H1 (cell line): ENCODE measurements at regions of chr16 and their contacts with region 1.

Region 1: GRCh38 chr16:50509521-50510341 is 38.5 kb upstream of the NKD1 start:
- DNase-seq: peak; percentile 65 to 95
- H3K4me3 ChIP-seq: no peak overlapping the region
- H3K27ac ChIP-seq: no peak overlapping the region
- H3K4me1 ChIP-seq: peaks cover 0 to 6% (median 1%) of the 10 kb centered on the region in 4 experiments; a peak in 5 of 7 replicates
- H3K27me3 ChIP-seq: no peaks in the 10 kb centered on the region
- CTCF ChIP-seq: peak; percentile 58 to 93 (median 83)
- EP300 ChIP-seq: 0 out of 3 replicates have a peak, but pooled peaks of 1 of the 2 experiments have one; percentile 10
- POLR2A ChIP-seq: no peak
- RAD21 ChIP-seq: peak; percentile 78 to 86

Region 2: DNA sequence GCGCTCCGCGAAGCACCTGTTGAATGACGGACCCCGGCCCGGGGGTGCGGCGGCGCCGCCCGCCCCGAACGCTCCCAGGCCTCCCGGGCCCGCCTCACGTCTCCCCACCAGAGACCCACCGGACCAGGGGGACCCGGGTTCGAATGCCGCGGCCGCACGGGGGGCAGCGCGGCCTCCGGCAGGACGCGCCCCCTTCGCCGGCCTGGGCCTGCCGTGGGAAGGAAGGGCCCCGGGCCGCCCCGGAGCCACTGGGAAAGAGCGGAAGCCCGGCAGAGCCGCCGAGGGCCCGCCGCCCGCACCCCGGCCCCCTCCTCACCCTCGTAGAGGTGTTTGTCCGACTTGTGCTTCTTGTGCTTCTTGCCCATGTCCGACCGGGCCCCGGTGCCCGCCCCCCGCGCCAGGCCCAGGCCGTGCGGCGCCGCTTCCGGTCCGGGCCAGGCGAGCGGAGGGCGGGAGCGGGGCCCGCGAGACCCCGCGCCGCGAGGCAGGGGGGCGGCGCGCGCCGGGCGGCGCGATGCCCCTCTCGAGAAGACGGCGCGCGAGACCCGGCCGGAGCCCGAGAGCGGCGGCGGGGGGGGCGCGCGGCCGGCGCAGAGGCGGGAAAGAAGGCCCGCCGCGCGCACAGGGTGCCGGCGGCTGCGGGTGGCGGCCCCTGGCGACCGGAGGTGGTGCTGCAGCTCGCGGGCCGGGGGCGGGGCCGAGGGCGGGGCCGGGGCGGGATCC is 141.2 kb before region 1 on chr16 and contains the start of gene BRD7:
- CTCF ChIA-PET with region 1: interaction called, 16 read pairs
- POLR2A ChIA-PET with region 1: no interaction called
- DNase-seq: peak in 1 of 2 experiments; percentile 71
- H3K4me3 ChIP-seq: peak within 1 kb of the TSS; percentile 69 to 98 (median 80)
- H3K27ac ChIP-seq: peak within 1 kb of the TSS; percentile 55; the same call in 1 of the 2 replicates
- H3K4me1 ChIP-seq: peaks cover 0 to 6% (median 3%) of the 10 kb centered on the region in 4 experiments; a peak in 4 of 7 replicates
- H3K27me3 ChIP-seq: no peaks in the 10 kb centered on the region
- CTCF ChIP-seq: peak; percentile 38 to 62 (median 59)
- EP300 ChIP-seq: no peak
- POLR2A ChIP-seq: peak in 1 of 2 experiments; percentile 30; a peak in 1 of 3 replicates
- RAD21 ChIP-seq: 0 out of 4 replicates have a peak, but pooled peaks of 1 of the 2 experiments have one; percentile 15
- total RNA-seq, gene BRD7: 119 and 120 TPM in 2 replicates

Region 3: GRCh38 chr16:50448501-50448900 is 61.2 kb before region 1 on chr16:
- CTCF ChIA-PET with region 1: interaction called, 13 read pairs
- POLR2A ChIA-PET with region 1: no interaction called
- DNase-seq: peak in 1 of 2 experiments; percentile 63
- H3K4me3 ChIP-seq: no peak overlapping the region; a peak in 1 of 8 replicates
- H3K27ac ChIP-seq: no peak overlapping the region
- H3K4me1 ChIP-seq: peaks cover 9 to 30% (median 17%) of the 10 kb centered on the region in 4 experiments; a peak in 6 of 7 replicates
- H3K27me3 ChIP-seq: no peaks in the 10 kb centered on the region; a peak in 1 of 7 replicates
- CTCF ChIP-seq: peak; percentile 62 to 76 (median 67)
- EP300 ChIP-seq: no peak
- POLR2A ChIP-seq: no peak
- RAD21 ChIP-seq: peak; percentile 65 to 75

Region 4: DNA sequence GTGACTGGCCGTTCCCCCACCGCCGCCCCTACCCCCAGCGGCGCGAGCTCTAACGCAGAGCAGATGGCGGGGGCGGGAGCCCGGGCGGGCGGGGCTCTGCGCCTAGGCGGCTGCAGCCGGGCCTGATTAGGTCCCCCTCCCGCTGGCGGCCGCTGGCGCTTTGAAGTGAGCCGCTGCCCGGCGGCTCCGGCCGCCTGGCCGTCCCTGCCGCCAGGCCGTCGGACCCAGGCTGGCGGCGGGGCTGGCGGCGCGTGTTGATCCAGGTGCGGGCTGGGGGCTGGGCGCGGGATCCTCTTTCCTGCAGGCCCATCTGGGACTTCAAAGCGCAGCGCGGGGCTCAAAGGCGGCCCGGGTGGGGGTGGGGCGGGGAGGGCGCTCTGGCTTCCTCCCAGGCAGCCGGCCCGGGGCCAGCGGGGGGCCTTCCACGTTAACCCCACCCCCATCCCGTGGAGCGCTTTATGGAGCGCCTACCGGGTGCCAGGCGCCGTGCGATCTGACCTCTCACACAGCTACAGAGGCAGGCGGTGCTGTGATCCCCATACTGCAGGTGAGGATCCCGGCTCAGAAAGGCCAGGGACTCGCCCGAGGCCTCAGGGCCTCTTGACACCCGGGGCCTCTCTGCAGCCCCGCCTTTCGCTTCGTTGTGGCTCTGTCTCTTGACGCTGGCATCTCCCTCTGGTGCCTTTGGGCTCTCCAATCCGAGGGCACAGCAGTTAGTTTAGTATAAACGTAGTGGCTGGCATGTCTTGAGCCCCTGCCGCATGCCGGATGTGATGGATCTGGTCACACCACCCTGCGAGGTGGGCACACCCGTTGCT is 41.6 kb before region 1 on chr16:
- CTCF ChIA-PET with region 1: interaction called, 23 read pairs
- POLR2A ChIA-PET with region 1: no interaction called
- DNase-seq: peak in 1 of 2 experiments; percentile 74
- H3K4me3 ChIP-seq: peak overlapping the region; percentile 27 to 53 (median 36)
- H3K27ac ChIP-seq: no peak overlapping the region
- H3K4me1 ChIP-seq: peaks cover 4 to 25% (median 15%) of the 10 kb centered on the region in 4 experiments
- H3K27me3 ChIP-seq: peaks cover 3 to 29% (median 26%) of the 10 kb centered on the region in 4 experiments
- CTCF ChIP-seq: 0 out of 4 replicates have a peak, but pooled peaks of 1 of the 3 experiments have one; percentile 7
- EP300 ChIP-seq: 0 out of 3 replicates have a peak, but pooled peaks of 1 of the 2 experiments have one; percentile 61
- POLR2A ChIP-seq: no peak
- RAD21 ChIP-seq: peak in 1 of 2 experiments; percentile 6; a peak in 1 of 4 replicates

Region 5: GRCh38 chr16:50520451-50521245 is 10.9 kb after region 1 on chr16:
- CTCF ChIA-PET with region 1: interaction called, 16 read pairs
- POLR2A ChIA-PET with region 1: no interaction called
- DNase-seq: no peak
- H3K4me3 ChIP-seq: no peak overlapping the region
- H3K27ac ChIP-seq: no peak overlapping the region
- H3K4me1 ChIP-seq: peaks cover 0 to 2% (median 0%) of the 10 kb centered on the region in 4 experiments; a peak in 1 of 7 replicates
- H3K27me3 ChIP-seq: no peaks in the 10 kb centered on the region
- CTCF ChIP-seq: no peak
- EP300 ChIP-seq: no peak
- POLR2A ChIP-seq: no peak
- RAD21 ChIP-seq: no peak

Region 6: DNA sequence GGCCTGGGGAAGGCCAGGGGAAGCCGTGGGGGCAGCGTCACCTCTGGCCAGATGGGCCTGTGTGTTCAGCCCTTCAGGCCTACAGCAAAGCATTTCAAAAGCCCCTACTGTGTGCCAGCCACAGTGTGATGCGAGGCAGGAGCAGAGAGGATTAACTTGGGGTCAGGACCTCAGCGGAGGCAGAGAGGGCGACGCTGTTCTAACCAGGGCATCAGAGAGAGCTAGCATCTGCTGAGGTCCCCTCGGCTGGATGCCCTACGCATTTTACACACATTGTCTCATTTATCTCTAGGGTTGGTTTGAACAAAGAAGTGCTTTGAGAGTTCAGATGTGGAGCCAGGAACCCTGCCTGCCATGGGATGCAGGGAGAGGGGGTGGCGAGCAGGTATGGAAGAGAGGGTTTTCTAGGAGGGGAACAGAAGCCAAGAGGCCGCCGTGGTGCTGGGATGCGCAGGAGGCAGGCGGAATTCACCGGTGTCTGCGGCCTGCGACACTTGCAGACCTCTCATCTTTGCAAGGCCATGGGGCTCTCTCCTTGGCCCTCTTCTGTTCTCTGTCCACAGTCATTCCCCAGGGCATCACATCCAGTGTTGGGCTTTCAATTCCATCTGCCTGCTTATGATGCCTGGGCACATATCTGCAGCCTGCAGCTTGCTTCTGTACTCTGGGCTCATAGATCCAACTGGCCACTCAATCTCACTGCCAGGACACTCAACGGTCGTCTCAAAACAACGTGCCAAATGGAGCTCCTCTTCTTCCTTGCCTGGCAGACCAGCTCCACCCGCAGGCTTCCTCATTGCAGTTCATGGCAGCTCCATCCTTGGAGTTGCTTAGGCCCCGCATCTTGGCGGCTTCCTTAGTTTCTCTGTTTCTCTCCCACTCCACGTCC is 30.3 kb after region 1 on chr16:
- CTCF ChIA-PET with region 1: interaction called, 10 read pairs
- POLR2A ChIA-PET with region 1: no interaction called
- DNase-seq: no peak
- H3K4me3 ChIP-seq: no peak overlapping the region
- H3K27ac ChIP-seq: no peak overlapping the region
- H3K4me1 ChIP-seq: peaks cover 0 to 7% (median 3%) of the 10 kb centered on the region in 4 experiments; a peak in 4 of 7 replicates
- H3K27me3 ChIP-seq: peaks cover 0 to 3% (median 1%) of the 10 kb centered on the region in 4 experiments; a peak in 1 of 7 replicates
- CTCF ChIP-seq: peak; percentile 48 to 57 (median 56); a peak in 3 of 4 replicates
- EP300 ChIP-seq: no peak
- POLR2A ChIP-seq: no peak
- RAD21 ChIP-seq: peak; percentile 69 to 71

Region 7: DNA sequence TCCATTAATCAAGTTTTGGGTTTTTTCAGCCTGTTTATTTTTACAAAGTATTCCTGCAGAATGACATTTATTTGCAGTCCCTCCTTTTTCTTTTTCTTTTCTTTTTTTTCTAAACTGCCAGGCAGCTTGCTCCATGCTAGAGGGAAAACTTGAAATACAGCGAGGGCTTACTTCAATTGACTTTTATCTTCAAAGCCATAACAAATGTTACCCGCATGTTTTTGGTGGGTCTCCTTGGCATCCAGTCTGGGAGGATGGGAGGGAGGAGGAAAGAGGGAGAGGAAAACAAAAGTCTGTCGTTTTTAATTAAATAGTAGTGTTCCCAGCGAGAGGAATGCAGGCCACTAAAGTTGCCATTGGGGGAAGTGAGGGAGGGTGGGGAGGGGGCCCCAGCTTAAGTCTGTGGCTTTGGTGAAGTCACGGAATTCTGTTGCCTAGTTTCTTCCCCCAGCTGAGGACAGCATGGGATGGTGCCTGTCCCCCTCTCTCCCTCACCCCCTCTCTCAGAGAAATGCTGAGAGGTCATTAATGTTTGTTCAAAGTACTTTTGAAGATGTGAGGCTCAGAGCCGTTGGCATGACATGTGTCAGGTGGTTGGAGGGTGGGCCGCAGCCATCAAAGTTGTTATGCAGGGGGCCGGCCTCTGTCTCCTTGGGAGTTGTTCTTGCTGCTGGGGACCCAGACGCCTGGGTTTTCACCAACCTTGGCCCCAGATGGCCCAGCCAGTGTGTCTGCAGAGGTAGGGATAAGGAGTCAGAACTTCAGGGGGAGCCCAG is 41.3 kb after region 1 on chr16:
- CTCF ChIA-PET with region 1: no interaction called
- POLR2A ChIA-PET with region 1: no interaction called
- DNase-seq: no peak
- H3K4me3 ChIP-seq: no peak overlapping the region
- H3K27ac ChIP-seq: no peak overlapping the region
- H3K4me1 ChIP-seq: peaks cover 0 to 2% (median 0%) of the 10 kb centered on the region in 4 experiments; a peak in 1 of 7 replicates
- H3K27me3 ChIP-seq: peaks cover 12 to 33% (median 28%) of the 10 kb centered on the region in 4 experiments
- CTCF ChIP-seq: no peak
- EP300 ChIP-seq: no peak
- POLR2A ChIP-seq: no peak
- RAD21 ChIP-seq: no peak

Region 8: DNA sequence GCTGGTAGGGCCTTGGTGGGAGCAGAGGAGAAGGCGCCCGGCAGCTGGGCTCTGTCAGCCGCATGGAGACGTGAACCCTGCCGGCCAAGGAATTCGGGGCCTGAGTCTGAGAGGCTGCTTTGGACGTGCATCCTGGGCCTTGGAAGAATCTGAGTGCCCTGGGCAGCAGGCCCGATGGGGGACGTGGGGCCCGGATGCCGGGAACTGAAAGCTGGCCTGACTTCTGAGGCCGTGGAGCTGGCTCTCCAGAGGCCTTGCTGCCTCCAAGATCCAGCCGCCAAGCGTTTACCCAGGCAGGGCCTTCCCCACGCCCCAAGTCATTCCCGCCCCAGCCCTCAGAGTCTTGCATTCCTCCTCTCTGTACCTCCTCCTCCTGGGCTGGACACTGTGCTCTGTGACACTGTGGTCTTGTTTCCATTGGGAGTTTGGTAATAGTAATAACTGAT is 75.6 kb after region 1 on chr16:
- CTCF ChIA-PET with region 1: no interaction called
- POLR2A ChIA-PET with region 1: no interaction called
- DNase-seq: no peak
- H3K4me3 ChIP-seq: no peak overlapping the region
- H3K27ac ChIP-seq: no peak overlapping the region
- H3K4me1 ChIP-seq: peaks cover 0 to 11% (median 5%) of the 10 kb centered on the region in 4 experiments; a peak in 4 of 7 replicates
- H3K27me3 ChIP-seq: no peaks in the 10 kb centered on the region
- CTCF ChIP-seq: no peak
- EP300 ChIP-seq: no peak
- POLR2A ChIP-seq: no peak
- RAD21 ChIP-seq: no peak